H1 (cell line): ENCODE measurements at regions of chr3 and their contacts with region 1.

Region 1: DNA sequence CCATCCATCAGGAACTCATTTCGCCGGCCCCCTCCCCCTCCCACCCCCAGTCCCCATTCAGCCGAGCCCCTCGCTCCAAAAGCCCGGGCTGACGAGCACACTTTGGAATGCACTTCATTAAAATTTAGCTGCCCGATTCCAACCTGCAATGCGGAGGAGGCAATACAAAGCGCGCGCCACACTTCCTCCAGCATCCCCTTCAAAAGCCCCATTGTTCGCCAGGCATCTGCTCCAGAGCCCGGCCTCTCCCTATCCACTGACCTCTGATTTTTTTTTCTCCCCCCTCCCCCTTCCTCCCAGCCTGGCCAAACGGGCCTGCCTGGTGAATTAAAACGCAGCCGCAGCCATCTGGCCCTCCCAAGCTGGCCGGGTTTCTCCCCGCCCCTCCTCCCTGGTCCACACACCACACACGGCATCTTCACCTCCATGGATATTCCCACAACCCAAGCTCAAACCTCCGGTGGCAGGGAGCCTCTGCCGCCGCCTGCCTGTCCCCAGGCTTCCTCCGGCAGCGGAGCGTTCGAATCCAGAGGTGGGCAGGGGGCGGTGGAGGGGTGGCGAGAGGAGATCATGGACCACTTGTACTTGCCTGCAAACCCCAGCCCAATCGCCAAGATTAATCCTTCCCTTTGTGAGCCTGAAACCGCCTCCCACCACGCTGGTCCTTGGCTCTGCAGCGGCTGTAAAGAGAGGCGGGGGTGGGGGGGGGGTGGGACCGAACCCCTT is 441.3 kb downstream of the MAGI1 start:
- DNase-seq: peak; percentile 79 to 88
- H3K4me3 ChIP-seq: peak overlapping the region; percentile 65 to 87 (median 69)
- H3K27ac ChIP-seq: peak overlapping the region; percentile 98
- H3K4me1 ChIP-seq: peaks cover 6 to 27% (median 19%) of the 10 kb centered on the region in 4 experiments; a peak in 6 of 7 replicates
- H3K27me3 ChIP-seq: no peaks in the 10 kb centered on the region
- CTCF ChIP-seq: no peak
- EP300 ChIP-seq: no peak
- POLR2A ChIP-seq: peak; percentile 45 to 50
- RAD21 ChIP-seq: no peak

Region 2: DNA sequence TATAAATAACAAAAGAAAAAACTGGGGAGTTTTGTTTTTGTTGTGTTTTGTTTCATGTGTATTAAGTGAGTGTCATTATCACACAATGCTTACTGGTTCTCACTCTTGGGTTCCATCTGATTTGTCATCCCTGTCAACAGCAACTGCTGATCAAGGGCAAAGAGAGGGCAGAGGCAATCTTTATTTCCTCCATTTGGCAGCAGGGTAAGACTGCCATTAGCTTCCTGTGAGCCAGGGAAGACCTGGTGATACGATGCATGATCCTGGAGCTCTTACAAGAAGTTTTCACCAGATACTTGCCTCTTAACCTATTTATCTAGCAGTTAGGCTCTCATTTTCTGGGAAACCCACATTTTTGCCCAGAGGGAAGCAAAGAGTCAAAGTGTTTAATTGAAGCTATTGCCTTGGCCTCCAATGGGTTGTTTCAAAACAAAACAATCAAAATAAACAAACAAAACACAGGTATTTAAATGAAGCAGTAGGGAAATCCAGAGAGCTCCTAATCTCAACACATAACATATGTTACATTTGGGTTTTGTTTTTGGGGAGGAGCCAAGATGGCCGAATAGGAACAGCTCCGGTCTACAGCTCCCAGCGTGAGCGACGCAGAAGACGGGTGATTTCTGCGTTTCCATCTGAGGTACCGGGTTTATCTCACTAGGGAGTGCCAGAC is 88.5 kb before region 1 on chr3:
- CTCF ChIA-PET with region 1: no interaction called
- POLR2A ChIA-PET with region 1: interaction called, 14 read pairs
- DNase-seq: no peak
- H3K4me3 ChIP-seq: peak overlapping the region; percentile 44 to 66 (median 51)
- H3K27ac ChIP-seq: peak overlapping the region; percentile 73
- H3K4me1 ChIP-seq: peaks cover 0 to 7% (median 4%) of the 10 kb centered on the region in 4 experiments; a peak in 3 of 7 replicates
- H3K27me3 ChIP-seq: no peaks in the 10 kb centered on the region
- CTCF ChIP-seq: no peak
- EP300 ChIP-seq: no peak
- POLR2A ChIP-seq: no peak
- RAD21 ChIP-seq: no peak

Region 3: DNA sequence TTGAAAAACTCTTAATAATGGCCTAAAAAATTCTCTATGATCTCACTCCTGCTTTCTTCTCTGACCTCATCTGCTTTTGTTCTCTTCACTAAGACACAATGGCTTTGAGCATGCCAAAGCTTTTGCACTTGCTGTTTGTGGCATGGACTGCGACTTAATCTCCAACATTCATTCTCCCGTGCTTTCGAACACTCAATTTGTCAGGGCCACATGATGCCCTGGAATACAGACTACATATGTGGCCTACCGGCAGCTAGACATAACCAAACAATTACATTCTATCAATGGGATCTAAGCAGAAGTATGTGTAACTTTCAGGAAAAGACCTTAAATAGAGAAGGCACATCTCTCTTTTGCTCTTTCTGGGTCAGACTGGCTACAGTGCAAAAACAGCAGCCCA is 65.2 kb before region 1 on chr3:
- CTCF ChIA-PET with region 1: no interaction called
- POLR2A ChIA-PET with region 1: no interaction called
- DNase-seq: no peak
- H3K4me3 ChIP-seq: no peak overlapping the region
- H3K27ac ChIP-seq: no peak overlapping the region
- H3K4me1 ChIP-seq: peaks cover 0 to 4% (median 1%) of the 10 kb centered on the region in 4 experiments; a peak in 2 of 7 replicates
- H3K27me3 ChIP-seq: no peaks in the 10 kb centered on the region
- CTCF ChIP-seq: no peak
- EP300 ChIP-seq: no peak
- POLR2A ChIP-seq: no peak
- RAD21 ChIP-seq: no peak

Region 4: DNA sequence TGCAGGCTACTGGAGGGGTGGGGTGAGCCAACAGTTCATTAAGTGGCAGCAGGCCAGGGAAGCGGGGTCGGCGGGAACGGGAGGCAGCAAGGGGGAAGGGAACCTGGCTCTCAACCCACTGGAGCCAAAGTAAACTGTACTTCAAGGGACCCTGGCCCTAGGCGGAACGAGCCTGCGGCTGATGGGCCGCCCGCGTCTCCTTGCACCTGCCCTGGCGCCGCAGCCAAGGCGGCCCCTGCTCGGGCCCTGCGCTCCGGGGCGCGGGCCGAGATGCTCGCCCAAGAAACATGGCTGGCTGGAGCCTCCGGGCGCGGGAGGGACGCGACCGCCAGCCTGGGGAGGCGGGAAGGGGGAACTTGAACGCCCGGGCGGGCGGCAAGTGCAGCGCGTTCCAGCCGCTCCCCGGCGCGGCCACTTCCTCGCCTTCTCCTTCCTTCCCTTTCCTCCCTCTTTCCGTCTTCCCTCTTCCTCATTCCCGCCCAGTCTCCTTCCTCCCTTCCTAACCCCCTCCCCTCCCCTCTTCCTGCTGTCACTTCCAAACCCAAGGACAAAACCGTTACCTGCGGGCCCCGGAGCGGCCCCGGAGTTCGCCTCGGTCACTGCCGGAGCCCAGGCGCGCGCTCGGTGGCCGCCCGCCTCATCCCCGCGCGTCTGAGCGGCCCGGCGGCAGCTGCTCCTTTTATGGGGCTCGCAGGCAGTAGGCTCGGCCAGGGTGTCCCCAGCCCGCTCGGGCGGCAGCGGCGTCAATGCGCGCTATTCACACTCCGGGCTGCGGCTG is 48.4 kb before region 1 on chr3:
- CTCF ChIA-PET with region 1: no interaction called
- POLR2A ChIA-PET with region 1: interaction called, 31 read pairs
- DNase-seq: peak in 1 of 2 experiments; percentile 74
- H3K4me3 ChIP-seq: peak overlapping the region; percentile 64 to 75 (median 69)
- H3K27ac ChIP-seq: no peak overlapping the region
- H3K4me1 ChIP-seq: peaks cover 4 to 14% (median 9%) of the 10 kb centered on the region in 4 experiments
- H3K27me3 ChIP-seq: no peaks in the 10 kb centered on the region
- CTCF ChIP-seq: no peak
- EP300 ChIP-seq: no peak
- POLR2A ChIP-seq: peak in 1 of 2 experiments; percentile 46; a peak in 2 of 3 replicates
- RAD21 ChIP-seq: peak in 1 of 2 experiments; percentile 7; a peak in 1 of 4 replicates

Region 5: DNA sequence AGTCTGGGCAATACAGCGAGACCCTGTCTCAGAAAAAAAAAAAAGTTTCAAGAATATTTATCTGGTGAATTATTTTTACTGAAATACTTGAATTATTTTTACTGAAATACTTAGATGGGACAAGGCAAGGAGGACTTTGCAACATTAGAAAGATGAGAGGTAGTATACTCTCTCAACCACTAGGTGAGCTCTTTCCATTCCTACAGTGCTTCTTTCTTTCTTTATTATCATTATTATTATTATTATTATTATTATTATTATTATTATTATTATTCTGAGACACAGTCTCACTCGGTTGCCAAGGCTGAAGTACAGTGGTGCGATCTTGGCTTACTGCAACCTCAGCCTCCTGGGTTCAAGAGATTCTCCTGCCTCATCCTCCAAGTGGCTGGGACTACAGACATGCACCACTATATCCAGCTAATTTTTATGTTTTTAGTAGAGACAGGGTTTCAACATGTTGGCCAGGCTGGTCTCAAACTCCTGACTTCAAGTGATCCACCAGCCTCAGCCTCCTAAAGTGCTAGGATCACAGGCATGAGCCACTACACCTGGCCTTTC is 27.5 kb before region 1 on chr3:
- CTCF ChIA-PET with region 1: interaction called, 13 read pairs
- POLR2A ChIA-PET with region 1: interaction called, 5 read pairs
- DNase-seq: no peak
- H3K4me3 ChIP-seq: no peak overlapping the region
- H3K27ac ChIP-seq: no peak overlapping the region
- H3K4me1 ChIP-seq: no peaks in the 10 kb centered on the region
- H3K27me3 ChIP-seq: no peaks in the 10 kb centered on the region
- CTCF ChIP-seq: peak in 1 of 3 experiments; percentile 25; a peak in 1 of 4 replicates
- EP300 ChIP-seq: no peak
- POLR2A ChIP-seq: no peak
- RAD21 ChIP-seq: peak; percentile 28 to 32

Region 6: DNA sequence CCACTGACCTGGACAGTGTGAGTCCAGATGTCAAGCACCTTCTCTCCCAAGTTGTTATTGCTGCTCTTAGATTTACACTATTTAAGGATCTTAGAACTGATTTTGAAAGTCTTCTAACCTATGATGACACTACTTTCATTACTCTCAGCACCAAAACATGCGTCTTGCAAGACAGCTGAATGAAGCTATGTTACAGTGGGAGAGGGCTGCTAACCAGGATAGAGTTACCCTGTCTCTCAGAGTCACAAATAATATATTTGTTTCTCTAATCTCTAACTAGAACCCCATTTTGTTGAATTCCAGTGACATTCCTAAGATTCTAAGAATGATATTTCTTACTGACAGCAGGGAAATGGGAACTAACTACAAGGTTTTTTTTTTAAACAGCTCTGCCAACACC is 14.2 kb before region 1 on chr3:
- CTCF ChIA-PET with region 1: interaction called, 4 read pairs
- POLR2A ChIA-PET with region 1: interaction called, 11 read pairs
- DNase-seq: no peak
- H3K4me3 ChIP-seq: no peak overlapping the region
- H3K27ac ChIP-seq: no peak overlapping the region
- H3K4me1 ChIP-seq: peaks cover under 1 to 20% (median 5%) of the 10 kb centered on the region in 4 experiments; a peak in 4 of 7 replicates
- H3K27me3 ChIP-seq: no peaks in the 10 kb centered on the region
- CTCF ChIP-seq: no peak
- EP300 ChIP-seq: no peak
- POLR2A ChIP-seq: no peak
- RAD21 ChIP-seq: no peak

Region 7: DNA sequence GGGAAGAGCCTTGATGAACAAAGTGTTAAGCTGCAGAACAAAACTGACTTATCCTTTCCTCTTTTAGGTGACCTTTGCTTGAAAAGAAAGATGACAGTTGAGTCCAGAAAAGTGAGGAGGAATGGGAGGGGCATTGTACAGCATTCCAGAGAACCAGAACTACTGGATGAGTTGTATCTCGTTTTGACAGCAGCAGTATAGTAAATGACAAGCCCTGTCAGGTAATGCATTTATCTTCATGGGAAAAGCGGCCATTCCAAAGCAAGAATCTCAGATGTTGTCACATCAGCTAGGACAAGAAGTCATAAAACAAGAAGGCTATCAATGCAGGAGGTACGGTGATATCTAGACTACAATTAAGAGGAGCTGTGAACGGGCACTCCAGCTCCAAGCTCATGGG is 19.8 kb after region 1 on chr3:
- CTCF ChIA-PET with region 1: interaction called, 3 read pairs
- POLR2A ChIA-PET with region 1: interaction called, 28 read pairs
- DNase-seq: no peak
- H3K4me3 ChIP-seq: no peak overlapping the region
- H3K27ac ChIP-seq: no peak overlapping the region
- H3K4me1 ChIP-seq: peaks cover 0 to 9% (median under 1%) of the 10 kb centered on the region in 4 experiments; a peak in 1 of 7 replicates
- H3K27me3 ChIP-seq: no peaks in the 10 kb centered on the region
- CTCF ChIP-seq: no peak
- EP300 ChIP-seq: no peak
- POLR2A ChIP-seq: no peak
- RAD21 ChIP-seq: no peak